SK-N-SH (cell line): ENCODE measurements at regions of chr9 and their contacts with region 1.

Region 1: DNA sequence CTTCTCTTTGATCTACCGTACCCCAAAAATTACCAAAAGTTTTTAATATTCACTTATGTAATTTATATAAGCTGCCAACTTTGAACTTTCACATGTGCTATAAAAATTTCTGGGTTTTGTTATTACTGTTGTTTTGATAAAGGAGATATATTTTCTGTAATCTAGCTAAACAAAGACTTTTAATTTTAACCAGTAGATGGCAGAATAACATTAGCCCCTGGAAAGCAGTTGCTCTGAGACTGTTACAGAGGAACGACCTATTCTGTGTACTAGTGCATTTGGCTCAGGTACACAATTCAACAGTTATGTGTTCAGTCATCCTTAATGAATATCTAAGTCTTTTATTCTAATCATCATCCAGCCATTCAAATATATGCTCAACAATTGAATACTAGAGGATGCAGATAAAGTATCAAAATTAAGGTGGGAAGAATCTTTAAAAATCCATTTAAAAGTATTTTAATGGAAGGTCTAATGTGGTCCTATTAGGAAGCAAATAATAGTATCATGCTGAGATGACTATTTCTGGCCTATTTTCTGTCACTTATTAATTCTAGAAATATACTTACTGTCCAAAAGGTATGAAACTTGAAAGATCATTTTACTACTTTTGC is 8.6 kb downstream of the KLHL9 start:
- DNase-seq: peak; percentile 45
- H3K4me3 ChIP-seq: no peak overlapping the region
- H3K27ac ChIP-seq: 0 out of 4 replicates have a peak overlapping the region, but pooled peaks of 1 of the 2 experiments have one; percentile 2
- H3K4me1 ChIP-seq: peaks cover 6 to 8% of the 10 kb centered on the region in 2 experiments; a peak in 3 of 4 replicates
- H3K27me3 ChIP-seq: no peaks in the 10 kb centered on the region
- CTCF ChIP-seq: peak; percentile 80
- EP300 ChIP-seq: no peak
- RAD21 ChIP-seq: peak; percentile 84

Region 2: GRCh38 chr9:21381448-21382339 is 55.1 kb after region 1 on chr9:
- CTCF ChIA-PET with region 1: interaction called, 11 read pairs
- POLR2A ChIA-PET with region 1: no interaction called
- DNase-seq: no peak
- H3K4me3 ChIP-seq: no peak overlapping the region
- H3K27ac ChIP-seq: no peak overlapping the region
- H3K4me1 ChIP-seq: no peaks in the 10 kb centered on the region
- H3K27me3 ChIP-seq: peaks cover 23% of the 10 kb centered on the region; the same call in 1 of the 2 replicates
- CTCF ChIP-seq: no peak
- EP300 ChIP-seq: no peak
- RAD21 ChIP-seq: no peak